ENCODE measurements at regions of chr1 and their contacts with region 1.

Region 1: GRCh38 chr1:170967042-170967910 is 31.9 kb downstream of the MROH9 start:
- DNase-seq: peak in 1 of 2 experiments; percentile 25
- H3K4me3 ChIP-seq: no peak overlapping the region
- H3K4me3 Mint-ChIP-seq: no peak overlapping the region
- H3K27ac Mint-ChIP-seq: no peak overlapping the region
- H3K4me1 ChIP-seq: no peaks in the 10 kb centered on the region
- H3K4me1 Mint-ChIP-seq: no peaks in the 10 kb centered on the region
- H3K27me3 ChIP-seq: no peaks in the 10 kb centered on the region
- H3K27me3 Mint-ChIP-seq: no peaks in the 10 kb centered on the region
- CTCF ChIP-seq: peak; percentile 60 to 66

Region 2: GRCh38 chr1:170917373-170917772 is 49.9 kb before region 1 on chr1:
- CTCF ChIA-PET with region 1: no interaction called
- POLR2A ChIA-PET with region 1: no interaction called
- intact Hi-C with region 1: no loop called
- DNase-seq: no peak
- H3K4me3 ChIP-seq: no peak overlapping the region
- H3K4me3 Mint-ChIP-seq: no peak overlapping the region
- H3K27ac Mint-ChIP-seq: no peak overlapping the region
- H3K4me1 ChIP-seq: no peaks in the 10 kb centered on the region
- H3K4me1 Mint-ChIP-seq: no peaks in the 10 kb centered on the region
- H3K27me3 ChIP-seq: no peaks in the 10 kb centered on the region
- H3K27me3 Mint-ChIP-seq: peaks cover 5% of the 10 kb centered on the region
- CTCF ChIP-seq: no peak

Region 3: DNA sequence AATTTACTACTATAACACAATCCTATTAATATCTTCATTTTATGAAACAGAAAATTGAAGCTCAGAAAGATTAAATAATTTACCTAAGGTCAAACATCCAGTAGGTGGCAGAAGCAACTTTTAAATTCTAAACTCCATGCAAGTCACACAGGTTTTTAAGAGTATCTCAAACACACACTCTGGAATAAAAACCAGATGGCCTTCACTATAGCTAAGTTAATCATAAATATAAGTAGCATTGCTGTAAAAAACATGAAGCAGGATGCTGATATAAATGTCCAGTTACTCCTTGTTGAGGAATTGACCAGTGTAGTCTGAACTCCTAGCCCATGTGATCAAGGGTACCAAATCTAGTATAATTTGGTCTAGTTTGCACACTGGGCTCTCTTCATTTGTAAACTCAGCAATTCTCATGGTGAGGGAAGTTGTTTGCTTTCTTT is 114.1 kb after region 1 on chr1:
- CTCF ChIA-PET with region 1: interaction called, 15 read pairs
- POLR2A ChIA-PET with region 1: no interaction called
- intact Hi-C with region 1: no loop called
- DNase-seq: peak in 1 of 2 experiments; percentile 4
- H3K4me3 ChIP-seq: no peak overlapping the region
- H3K4me3 Mint-ChIP-seq: no peak overlapping the region
- H3K27ac Mint-ChIP-seq: no peak overlapping the region
- H3K4me1 ChIP-seq: peaks cover 7% of the 10 kb centered on the region; the same call in 1 of the 2 replicates
- H3K4me1 Mint-ChIP-seq: no peaks in the 10 kb centered on the region
- H3K27me3 ChIP-seq: no peaks in the 10 kb centered on the region
- H3K27me3 Mint-ChIP-seq: no peaks in the 10 kb centered on the region
- CTCF ChIP-seq: peak; percentile 21 to 40